Heart left ventricle (tissue), 16 donors: ENCODE measurements at regions of chr2 and their contacts with region 1.

Region 1: DNA sequence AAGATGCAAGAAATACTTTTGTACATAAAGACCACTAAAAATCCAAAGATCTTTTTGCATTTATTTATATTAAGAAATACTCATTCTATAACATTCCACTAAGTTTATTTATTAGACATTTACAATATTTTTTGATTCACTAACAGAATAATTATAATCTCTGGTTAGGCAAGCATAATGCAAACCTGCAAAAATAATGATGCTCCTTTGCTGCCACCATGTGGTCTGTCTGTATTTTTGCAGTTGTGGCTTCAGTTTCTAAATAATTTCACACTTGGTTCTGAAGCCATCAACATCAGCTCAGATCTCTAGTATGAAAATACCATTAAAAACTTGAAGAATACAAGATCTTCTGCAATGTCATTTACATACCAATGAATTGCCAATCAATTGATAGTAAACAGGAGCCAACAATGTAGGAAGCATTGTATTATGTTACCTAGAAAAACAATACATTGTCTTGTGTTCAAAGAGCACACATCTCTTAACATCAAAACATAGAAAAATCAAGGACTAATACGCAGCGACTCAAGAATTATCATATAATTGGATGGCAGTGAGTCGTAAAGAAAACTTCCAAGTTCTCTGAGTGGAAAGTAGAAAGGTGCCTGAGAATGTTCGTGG is 28.8 kb upstream of the WDR75 start:
- DNase-seq: peak in 1 of 5 donors; percentile 23
- ATAC-seq: peak in 3 of 4 donors; percentile 50 to 72 (median 54)
- H3K4me3 ChIP-seq: no peak overlapping the region
- H3K27ac ChIP-seq: peak overlapping the region in 7 of 12 donors; percentile 2 to 73 (median 45)
- H3K4me1 ChIP-seq: peaks cover 0 to 18% (median 1%) of the 10 kb centered on the region in 12 donors
- H3K27me3 ChIP-seq: no peaks in the 10 kb centered on the region
- CTCF ChIP-seq: peak; percentile 55 to 84 (median 72)
- POLR2A ChIP-seq: no peak

Region 2: GRCh38 chr2:187499941-187500532 is 1912.4 kb before region 1 on chr2:
- intact Hi-C with region 1: loop called in 1 of 10 experiments (anchors 5 kb)
- DNase-seq: peak in 3 of 5 donors; percentile 30 to 41 (median 39)
- ATAC-seq: peak in 3 of 4 donors; percentile 39 to 77 (median 62)
- H3K4me3 ChIP-seq: no peak overlapping the region
- H3K27ac ChIP-seq: no peak overlapping the region
- H3K4me1 ChIP-seq: peaks cover 0 to 35% (median 0%) of the 10 kb centered on the region in 12 donors
- H3K27me3 ChIP-seq: no peaks in the 10 kb centered on the region
- CTCF ChIP-seq: peak; percentile 70 to 96 (median 84)
- POLR2A ChIP-seq: no peak

Region 3: GRCh38 chr2:188518381-188518780 is 894.1 kb before region 1 on chr2:
- intact Hi-C with region 1: loop called in 3 of 10 experiments (anchors 5 kb)
- DNase-seq: no peak
- ATAC-seq: no peak
- H3K4me3 ChIP-seq: no peak overlapping the region
- H3K27ac ChIP-seq: no peak overlapping the region
- H3K4me1 ChIP-seq: no peaks in the 10 kb centered on the region
- H3K27me3 ChIP-seq: no peaks in the 10 kb centered on the region
- CTCF ChIP-seq: no peak
- POLR2A ChIP-seq: no peak

Region 4: DNA sequence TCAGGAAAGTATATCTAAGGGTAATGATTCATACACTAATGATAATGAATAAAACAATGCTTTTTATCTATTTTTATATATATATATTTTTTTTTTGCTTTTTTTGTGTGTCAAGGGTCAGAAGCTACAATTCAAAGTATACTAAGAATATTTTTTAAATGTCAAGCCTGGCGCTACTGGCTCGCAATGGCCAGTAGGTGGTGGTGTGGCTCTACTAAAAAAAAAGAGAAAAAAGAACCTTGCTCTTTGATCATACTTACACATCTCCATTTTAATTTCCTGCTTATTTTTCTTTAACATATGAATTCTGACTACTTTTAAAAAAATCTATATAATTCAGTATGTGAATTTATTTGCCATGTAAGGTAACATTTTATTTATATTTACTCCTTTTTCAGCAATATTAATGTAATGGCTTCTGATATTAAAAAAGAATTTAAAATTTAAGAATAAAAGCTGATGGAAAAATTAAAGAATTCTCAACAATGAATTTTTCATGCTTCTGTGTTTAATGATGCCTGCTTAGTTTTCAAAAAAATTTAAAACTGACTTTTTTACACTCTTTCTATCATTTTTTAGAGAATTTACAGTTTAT is 887.8 kb before region 1 on chr2:
- intact Hi-C with region 1: loop called (anchors 5 kb)
- DNase-seq: no peak
- ATAC-seq: peak in 1 of 4 donors; percentile 72
- H3K4me3 ChIP-seq: no peak overlapping the region
- H3K27ac ChIP-seq: no peak overlapping the region
- H3K4me1 ChIP-seq: peaks cover 0 to 11% (median 0%) of the 10 kb centered on the region in 12 donors
- H3K27me3 ChIP-seq: no peaks in the 10 kb centered on the region
- CTCF ChIP-seq: peak; percentile 66 to 89 (median 80)
- POLR2A ChIP-seq: no peak

Region 5: GRCh38 chr2:188983427-188984064 is 428.9 kb before region 1 on chr2:
- intact Hi-C with region 1: loop called in 1 of 10 experiments (anchors 10 kb)
- DNase-seq: no peak
- ATAC-seq: peak in 2 of 4 donors; percentile 26 to 66
- H3K4me3 ChIP-seq: peak overlapping the region in 3 of 12 donors; percentile 9 to 70 (median 62)
- H3K27ac ChIP-seq: peak overlapping the region in 9 of 12 donors; percentile 28 to 80 (median 50)
- H3K4me1 ChIP-seq: peaks cover 0 to 30% (median 1%) of the 10 kb centered on the region in 12 donors
- H3K27me3 ChIP-seq: no peaks in the 10 kb centered on the region
- CTCF ChIP-seq: peak in 10 of 12 donors; percentile 8 to 44 (median 21)
- POLR2A ChIP-seq: no peak

Region 6: DNA sequence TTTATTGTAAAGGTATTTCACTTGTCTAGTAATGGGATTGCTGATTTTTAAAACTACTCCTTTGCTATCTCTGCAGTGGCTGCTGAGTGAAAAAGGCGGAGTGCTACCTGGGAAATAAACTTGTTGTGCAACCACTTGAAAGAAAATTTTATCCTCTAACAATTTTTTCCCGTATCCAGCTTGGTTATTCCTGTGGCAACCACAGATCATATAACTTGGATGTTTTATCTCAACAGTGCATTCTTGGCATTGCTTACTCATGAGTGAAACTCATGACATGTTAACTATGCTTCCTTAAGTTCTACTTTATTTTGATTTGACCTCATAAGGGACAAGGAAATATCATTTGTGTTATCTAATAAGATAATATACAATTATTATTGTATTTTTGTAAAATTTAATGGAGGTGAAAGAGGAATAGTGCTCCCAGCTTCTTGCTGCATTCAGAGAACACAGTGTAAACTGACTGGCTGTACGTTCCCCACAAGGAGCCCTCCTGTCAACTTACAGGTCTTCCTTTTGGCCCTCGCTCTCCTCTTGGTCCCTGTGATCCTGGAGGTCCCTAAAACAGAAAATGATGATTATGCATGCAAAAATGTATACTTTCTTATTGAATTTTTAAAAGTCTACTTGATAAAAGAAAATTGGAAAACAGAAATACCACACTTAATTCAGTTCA is 315.5 kb before region 1 on chr2:
- intact Hi-C with region 1: loop called in 8 of 10 experiments (anchors 2 to 5 kb)
- DNase-seq: no peak
- ATAC-seq: no peak
- H3K4me3 ChIP-seq: no peak overlapping the region
- H3K27ac ChIP-seq: no peak overlapping the region
- H3K4me1 ChIP-seq: peaks cover 0 to 34% (median 5%) of the 10 kb centered on the region in 12 donors
- H3K27me3 ChIP-seq: no peaks in the 10 kb centered on the region
- CTCF ChIP-seq: no peak
- POLR2A ChIP-seq: no peak